Natural killer cell (primary cell): ENCODE measurements at regions of chr19 and their contacts with region 1.

Region 1: DNA sequence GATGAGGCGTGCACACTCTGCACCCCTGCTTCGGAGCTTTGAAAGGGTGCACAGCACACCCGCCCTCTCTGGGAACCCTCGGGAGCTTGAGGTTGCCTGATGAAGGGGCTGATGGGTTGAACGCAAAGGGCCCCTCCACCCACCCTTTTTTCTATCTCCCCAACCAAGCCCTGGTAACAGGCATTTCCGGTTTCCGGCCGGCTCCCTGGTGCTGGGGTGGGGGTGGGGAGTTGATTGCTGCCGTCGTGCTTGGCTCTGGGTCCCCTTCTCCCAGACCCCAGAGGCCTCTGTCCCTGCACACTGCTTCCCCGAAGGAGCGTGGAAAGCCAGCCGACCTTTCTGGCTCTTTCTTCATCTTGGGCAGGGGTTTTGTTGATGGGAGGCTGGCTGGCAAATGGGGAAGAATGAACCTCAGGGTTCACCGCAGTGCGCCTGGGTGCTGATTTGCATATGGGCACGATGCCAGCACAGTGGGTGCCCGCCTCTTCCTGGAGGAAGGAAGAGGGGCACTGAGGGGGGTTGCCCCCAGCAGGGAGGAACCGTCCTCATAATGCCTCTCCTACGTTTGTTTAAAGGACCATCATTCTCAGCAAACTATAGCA is 29.1 kb downstream of the VAV1 start:
- DNase-seq: peak; percentile 69 to 94
- ATAC-seq: peak; percentile 45 to 65 (median 49)
- H3K4me3 ChIP-seq: peak overlapping the region; percentile 43
- H3K4me3 Mint-ChIP-seq: peak overlapping the region; percentile 99
- H3K27ac ChIP-seq: peak overlapping the region; percentile 84
- H3K27ac Mint-ChIP-seq: peak overlapping the region; percentile 97 to 99
- H3K4me1 ChIP-seq: peaks cover 54% of the 10 kb centered on the region
- H3K4me1 Mint-ChIP-seq: peaks cover 59 to 61% of the 10 kb centered on the region in 2 donors
- H3K27me3 ChIP-seq: no peaks in the 10 kb centered on the region
- H3K27me3 Mint-ChIP-seq: no peaks in the 10 kb centered on the region
- CTCF ChIP-seq: no peak

Region 2: GRCh38 chr19:6639439-6639838 is 162.1 kb before region 1 on chr19:
- intact Hi-C with region 1: no loop called
- DNase-seq: no peak
- ATAC-seq: peak; percentile 42 to 81 (median 57)
- H3K4me3 ChIP-seq: no peak overlapping the region
- H3K4me3 Mint-ChIP-seq: peak overlapping the region; percentile 13
- H3K27ac ChIP-seq: no peak overlapping the region
- H3K27ac Mint-ChIP-seq: peak overlapping the region; percentile 83 to 89
- H3K4me1 ChIP-seq: peaks cover 42% of the 10 kb centered on the region
- H3K4me1 Mint-ChIP-seq: peaks cover 19 to 38% of the 10 kb centered on the region in 2 donors
- H3K27me3 ChIP-seq: no peaks in the 10 kb centered on the region
- H3K27me3 Mint-ChIP-seq: no peaks in the 10 kb centered on the region
- CTCF ChIP-seq: no peak

Region 3: GRCh38 chr19:6663236-6664201 is 138.1 kb before region 1 on chr19:
- intact Hi-C with region 1: loop called (anchors 5 kb)
- DNase-seq: peak; percentile 56 to 77
- ATAC-seq: peak; percentile 69 to 83 (median 69)
- H3K4me3 ChIP-seq: no peak overlapping the region
- H3K4me3 Mint-ChIP-seq: no peak overlapping the region
- H3K27ac ChIP-seq: peak overlapping the region; percentile 66
- H3K27ac Mint-ChIP-seq: no peak overlapping the region
- H3K4me1 ChIP-seq: peaks cover 92% of the 10 kb centered on the region
- H3K4me1 Mint-ChIP-seq: peaks cover 36 to 46% of the 10 kb centered on the region in 2 donors
- H3K27me3 ChIP-seq: no peaks in the 10 kb centered on the region
- H3K27me3 Mint-ChIP-seq: no peaks in the 10 kb centered on the region
- CTCF ChIP-seq: no peak

Region 4: DNA sequence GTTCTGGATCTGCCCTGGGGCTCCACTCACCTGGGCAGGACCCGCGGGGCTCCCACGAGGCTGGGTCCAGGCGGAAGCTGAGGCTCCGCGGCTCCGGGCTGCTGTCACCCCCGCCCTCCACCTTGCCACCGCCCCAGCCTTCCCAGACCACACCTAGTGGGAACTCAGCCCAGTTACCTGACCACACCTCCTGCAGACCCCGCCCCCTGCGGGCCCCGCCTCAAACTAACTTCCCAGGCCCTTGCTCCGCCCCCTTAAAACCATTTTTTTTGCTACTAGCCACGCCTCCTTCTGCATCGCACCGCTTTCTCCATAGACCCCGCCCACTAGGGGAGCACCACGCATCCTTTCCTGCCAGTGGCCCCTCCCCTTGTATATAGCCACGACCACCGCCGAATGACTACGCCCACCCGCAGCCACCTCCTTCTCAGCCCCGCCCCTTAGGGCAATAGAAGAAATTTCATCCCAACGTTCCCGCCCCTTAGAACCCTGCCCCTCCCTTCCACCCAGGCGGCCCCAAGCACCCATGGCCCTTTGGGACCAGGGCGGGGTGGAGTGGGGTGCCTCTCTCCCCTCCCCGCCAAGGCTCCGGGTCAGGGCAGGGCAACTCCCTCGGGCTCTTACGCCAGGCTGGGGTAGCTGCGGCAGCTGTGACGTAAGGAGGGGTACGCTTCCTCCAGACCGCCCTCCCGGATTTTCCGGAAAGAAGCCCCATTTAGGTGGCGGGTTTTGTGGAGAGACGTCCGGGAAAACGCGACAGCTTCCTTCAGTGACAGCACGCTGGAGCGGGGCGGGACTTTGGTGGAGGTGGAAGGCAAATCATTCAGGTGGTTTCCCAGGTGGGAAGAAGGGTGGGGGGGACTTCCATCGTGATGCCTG is 34.0 kb before region 1 on chr19 and contains the start of gene SH2D3A:
- intact Hi-C with region 1: loop called (anchors 1 kb)
- DNase-seq: peak; percentile 79 to 97
- ATAC-seq: peak; percentile 60 to 80 (median 63)
- H3K4me3 ChIP-seq: peak within 1 kb of the TSS; percentile 65
- H3K4me3 Mint-ChIP-seq: peak within 1 kb of the TSS; percentile 90
- H3K27ac ChIP-seq: peak within 1 kb of the TSS; percentile 96
- H3K27ac Mint-ChIP-seq: peak within 1 kb of the TSS; percentile 85 to 96
- H3K4me1 ChIP-seq: peaks cover 43% of the 10 kb centered on the region
- H3K4me1 Mint-ChIP-seq: peaks cover 34 to 44% of the 10 kb centered on the region in 2 donors
- H3K27me3 ChIP-seq: no peaks in the 10 kb centered on the region
- H3K27me3 Mint-ChIP-seq: no peaks in the 10 kb centered on the region
- CTCF ChIP-seq: no peak
- total RNA-seq, gene SH2D3A: 14.6 to 20.1 (median 15.3) TPM

Region 5: GRCh38 chr19:7191946-7192691 is 390.5 kb after region 1 on chr19:
- intact Hi-C with region 1: loop called (anchors 5 kb)
- DNase-seq: peak; percentile 50 to 81
- ATAC-seq: peak; percentile 69 to 89 (median 73)
- H3K4me3 ChIP-seq: no peak overlapping the region
- H3K4me3 Mint-ChIP-seq: peak overlapping the region; percentile 80
- H3K27ac ChIP-seq: no peak overlapping the region
- H3K27ac Mint-ChIP-seq: peak overlapping the region; percentile 77 to 87
- H3K4me1 ChIP-seq: peaks cover 39% of the 10 kb centered on the region
- H3K4me1 Mint-ChIP-seq: peaks cover 36 to 44% of the 10 kb centered on the region in 2 donors
- H3K27me3 ChIP-seq: no peaks in the 10 kb centered on the region
- H3K27me3 Mint-ChIP-seq: no peaks in the 10 kb centered on the region
- CTCF ChIP-seq: peak; percentile 34